ENCODE measurements at regions of chr3 and their contacts with region 1.

Region 1: GRCh38 chr3:129316131-129317013 is 37.7 kb downstream of the HMCES start:
- DNase-seq: peak; percentile 88
- H3K4me3 Mint-ChIP-seq: peak overlapping the region; percentile 81
- H3K27ac Mint-ChIP-seq: peak overlapping the region; percentile 80
- H3K4me1 Mint-ChIP-seq: peaks cover 32% of the 10 kb centered on the region
- H3K27me3 Mint-ChIP-seq: no peaks in the 10 kb centered on the region

Region 2: GRCh38 chr3:128969993-128970739 is 346.2 kb before region 1 on chr3:
- intact Hi-C with region 1: loop called (anchors 1 kb)
- DNase-seq: peak; percentile 52
- H3K4me3 Mint-ChIP-seq: no peak overlapping the region
- H3K27ac Mint-ChIP-seq: no peak overlapping the region
- H3K4me1 Mint-ChIP-seq: peaks cover 10% of the 10 kb centered on the region
- H3K27me3 Mint-ChIP-seq: peaks cover 9% of the 10 kb centered on the region

Region 3: DNA sequence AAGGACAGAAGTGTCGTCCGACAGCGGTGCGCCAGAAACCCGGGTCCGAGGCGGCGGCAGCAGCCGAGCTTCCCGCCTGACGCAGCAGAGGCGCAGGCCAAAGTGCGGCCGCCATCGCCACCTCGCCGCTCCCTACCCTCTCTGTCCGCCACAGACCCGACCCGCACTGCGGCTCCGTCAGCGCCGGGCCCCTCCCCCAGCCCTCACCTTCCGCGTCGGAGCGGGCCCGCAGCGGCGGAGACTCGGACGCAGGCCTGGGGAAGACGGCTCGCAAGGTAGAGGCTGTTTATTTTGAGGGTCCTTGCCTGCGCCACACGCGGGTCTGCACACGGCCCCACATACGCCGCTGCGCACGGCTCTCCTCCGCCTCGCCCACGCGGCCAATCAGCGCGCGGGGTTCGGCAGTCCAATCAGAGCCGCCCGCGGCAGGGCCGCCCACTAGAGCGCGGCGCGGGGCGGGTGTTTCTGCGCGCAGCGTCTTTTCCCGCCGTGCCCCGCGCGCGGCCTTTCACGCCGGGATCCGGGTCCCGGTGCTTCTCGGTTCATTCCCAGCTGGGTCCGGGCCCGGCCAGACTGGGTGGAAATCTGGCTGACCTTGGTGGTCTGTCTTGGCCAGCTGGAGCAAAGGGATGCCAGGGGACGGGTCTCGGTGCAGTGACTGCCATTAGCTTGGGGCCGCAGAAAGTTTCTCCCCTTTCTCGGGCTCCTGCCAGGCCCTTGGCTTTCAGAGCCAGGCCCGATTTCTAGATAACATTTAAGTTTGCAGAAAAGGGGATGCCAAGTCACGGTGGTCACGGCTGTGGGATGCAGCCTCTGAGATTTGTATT is 132.6 kb before region 1 on chr3 and contains the start of gene CNBP:
- intact Hi-C with region 1: loop called (anchors 2 kb)
- DNase-seq: peak; percentile 91
- H3K4me3 Mint-ChIP-seq: peak within 1 kb of the TSS; percentile 97
- H3K27ac Mint-ChIP-seq: peak within 1 kb of the TSS; percentile 98
- H3K4me1 Mint-ChIP-seq: peaks cover 35% of the 10 kb centered on the region
- H3K27me3 Mint-ChIP-seq: no peaks in the 10 kb centered on the region
- total RNA-seq, gene CNBP: 408 and 425 TPM in 2 replicates

Region 4: GRCh38 chr3:129343643-129344332 is 27.4 kb after region 1 on chr3:
- intact Hi-C with region 1: no loop called
- DNase-seq: no peak
- H3K4me3 Mint-ChIP-seq: no peak overlapping the region
- H3K27ac Mint-ChIP-seq: no peak overlapping the region
- H3K4me1 Mint-ChIP-seq: no peaks in the 10 kb centered on the region
- H3K27me3 Mint-ChIP-seq: peaks cover 28% of the 10 kb centered on the region

Region 5: GRCh38 chr3:129399145-129399894 is 82.9 kb after region 1 on chr3:
- intact Hi-C with region 1: loop called (anchors 1 kb)
- DNase-seq: peak; percentile 73
- H3K4me3 Mint-ChIP-seq: peak overlapping the region; percentile 96
- H3K27ac Mint-ChIP-seq: peak overlapping the region; percentile 94
- H3K4me1 Mint-ChIP-seq: peaks cover 23% of the 10 kb centered on the region
- H3K27me3 Mint-ChIP-seq: no peaks in the 10 kb centered on the region

Region 6: DNA sequence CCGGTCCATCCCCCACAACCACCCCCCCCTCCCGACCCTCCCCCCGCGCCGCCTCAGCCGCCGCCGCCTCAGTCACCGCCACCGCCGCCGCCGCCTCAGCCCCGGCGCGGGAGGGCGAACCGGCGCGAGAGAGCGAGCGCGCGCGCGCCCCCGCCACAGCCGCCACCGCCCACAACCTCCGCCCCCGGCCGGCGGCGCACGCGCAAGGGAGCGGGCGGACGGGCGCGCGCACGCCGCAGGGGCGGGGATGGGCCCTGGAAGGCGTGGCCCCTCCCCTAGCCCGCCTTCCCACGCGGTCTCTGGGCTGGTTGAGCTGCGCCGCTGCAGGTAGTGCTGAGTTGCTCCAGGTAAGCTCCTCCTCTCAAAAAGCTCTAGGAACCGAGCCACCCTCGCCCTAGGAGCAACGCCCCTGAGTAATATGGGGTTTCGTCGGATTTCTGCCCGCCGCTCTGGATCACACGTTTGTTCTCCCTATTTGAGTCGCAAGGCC is 577.3 kb after region 1 on chr3 and contains the start of gene TMCC1:
- intact Hi-C with region 1: loop called (anchors 5 kb)
- DNase-seq: peak; percentile 83
- H3K4me3 Mint-ChIP-seq: peak within 1 kb of the TSS; percentile 91
- H3K27ac Mint-ChIP-seq: peak within 1 kb of the TSS; percentile 89
- H3K4me1 Mint-ChIP-seq: peaks cover 47% of the 10 kb centered on the region
- H3K27me3 Mint-ChIP-seq: no peaks in the 10 kb centered on the region
- total RNA-seq, gene TMCC1: 17.1 and 22.4 TPM in 2 replicates

Region 7: DNA sequence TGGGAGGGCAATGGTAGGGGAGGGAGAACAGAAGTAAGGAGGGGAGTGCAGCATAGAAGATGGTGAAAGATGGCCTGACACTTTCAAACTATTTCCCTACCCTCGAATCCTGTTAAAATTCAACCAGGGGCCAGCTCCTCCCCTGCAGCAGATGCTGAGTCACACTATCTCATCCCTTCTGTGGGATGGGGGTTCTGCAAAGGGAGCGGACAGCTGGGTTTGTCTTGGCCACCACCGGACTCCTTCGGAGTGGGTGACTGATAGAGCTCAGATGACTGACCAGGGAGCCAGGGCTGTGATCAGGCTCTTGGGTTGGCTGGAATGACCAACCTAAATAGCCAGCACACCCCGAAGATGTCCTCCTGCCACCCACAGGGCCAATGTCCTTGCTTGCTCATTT is 610.7 kb after region 1 on chr3:
- intact Hi-C with region 1: no loop called
- DNase-seq: no peak
- H3K4me3 Mint-ChIP-seq: no peak overlapping the region
- H3K27ac Mint-ChIP-seq: no peak overlapping the region
- H3K4me1 Mint-ChIP-seq: no peaks in the 10 kb centered on the region
- H3K27me3 Mint-ChIP-seq: peaks cover 8% of the 10 kb centered on the region

Measured in activated T-helper 1 cell treated with anti-CD3 and anti-CD28 coated beads, Interleukin-12 subunit alpha, Interleukin-12 subunit beta, Interleukin-2, Interleukin-4 antibody, amounts not matched to agents 30 ng/mL and 10 ng/mL and 1 ng/mL, durations not matched to agents 14 hours and 24 hours and 36 hours (primary cell).